Left ventricle myocardium inferior (tissue), 1 donor: ENCODE measurements at regions of chr6 and their contacts with region 1.

Region 1: GRCh38 chr6:34414999-34415858 is 10.6 kb downstream of the RPS10 start:
- DNase-seq: no peak
- H3K4me3 ChIP-seq: no peak overlapping the region
- H3K27ac ChIP-seq: peak overlapping the region; percentile 62
- H3K4me1 ChIP-seq: peaks cover 8% of the 10 kb centered on the region
- H3K27me3 ChIP-seq: no peaks in the 10 kb centered on the region
- CTCF ChIP-seq: peak; percentile 86

Region 2: DNA sequence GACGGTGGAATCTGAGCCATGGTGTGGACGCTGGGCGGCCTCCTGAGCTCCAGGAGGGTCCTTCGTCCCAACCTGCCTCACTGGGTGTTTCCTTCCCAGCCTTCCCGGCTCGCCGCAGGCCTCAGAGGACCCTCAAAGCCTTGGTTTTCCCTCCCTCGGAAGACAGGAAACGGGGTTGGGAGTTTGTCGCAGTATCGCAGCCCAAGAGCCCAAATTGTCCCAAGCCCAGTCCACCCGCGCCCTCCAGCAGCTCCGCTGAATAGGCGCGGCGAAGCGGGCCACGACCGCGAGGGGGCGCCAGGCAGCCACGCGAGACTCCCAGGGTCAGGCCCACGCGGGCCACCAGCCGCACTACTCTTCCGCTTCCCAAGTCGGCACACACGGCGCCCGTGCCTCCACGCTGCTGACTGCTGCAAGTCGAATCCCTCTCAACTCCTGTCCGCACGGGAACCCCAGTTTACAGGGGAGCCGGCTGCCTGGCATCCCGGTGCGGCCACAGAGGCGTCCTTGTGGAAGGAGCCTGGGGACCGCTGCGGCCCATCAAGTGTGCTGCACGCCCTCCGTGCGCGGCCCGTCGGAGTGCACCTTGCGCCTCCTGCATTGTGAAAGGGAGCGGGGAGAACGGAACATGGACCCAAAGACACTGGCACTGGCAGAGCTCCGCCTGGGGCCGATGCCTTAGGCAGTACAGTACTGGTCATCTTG is 219.0 kb before region 1 on chr6:
- intact Hi-C with region 1: loop called (anchors 10 kb)
- DNase-seq: peak; percentile 88
- H3K4me3 ChIP-seq: peak overlapping the region; percentile 72
- H3K27ac ChIP-seq: no peak overlapping the region
- H3K4me1 ChIP-seq: peaks cover 9% of the 10 kb centered on the region
- H3K27me3 ChIP-seq: no peaks in the 10 kb centered on the region
- CTCF ChIP-seq: peak; percentile 98

Region 3: DNA sequence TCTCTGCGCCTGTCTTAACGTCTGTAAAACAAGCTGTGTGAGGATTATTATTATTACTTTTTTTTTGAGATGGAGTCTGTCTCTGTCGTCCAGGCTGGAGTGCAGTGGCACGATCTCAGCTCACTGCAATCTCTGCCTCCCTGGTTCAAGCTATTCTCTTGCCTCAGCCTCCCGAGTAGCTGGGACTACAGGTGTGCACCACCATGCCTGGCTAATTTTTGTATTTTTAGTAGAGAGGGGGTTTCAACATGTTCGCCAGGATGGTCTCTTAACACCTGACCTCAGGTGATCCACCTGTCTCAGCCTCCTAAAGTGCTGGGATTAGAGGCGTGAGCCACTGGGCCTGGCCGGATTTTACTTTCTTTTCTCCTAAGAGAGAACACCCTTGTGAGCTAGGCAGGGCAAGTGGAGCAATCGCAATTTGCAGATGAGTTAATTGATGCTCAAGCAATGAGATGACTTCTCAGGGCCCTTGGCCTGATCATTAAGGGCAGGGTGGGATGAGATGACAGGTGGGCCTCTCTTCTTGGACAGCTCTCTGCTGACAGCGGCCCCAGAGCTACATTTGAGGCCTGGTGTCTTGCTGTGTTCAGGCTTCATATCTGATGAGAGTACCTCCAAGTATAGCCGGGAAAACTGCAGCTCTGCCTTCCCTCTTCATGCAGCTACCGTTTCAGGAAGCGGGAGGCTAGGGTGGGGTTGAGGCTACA is 165.5 kb before region 1 on chr6:
- intact Hi-C with region 1: loop called (anchors 5 kb)
- DNase-seq: no peak
- H3K4me3 ChIP-seq: peak overlapping the region; percentile 83
- H3K27ac ChIP-seq: peak overlapping the region; percentile 98
- H3K4me1 ChIP-seq: peaks cover 29% of the 10 kb centered on the region
- H3K27me3 ChIP-seq: no peaks in the 10 kb centered on the region
- CTCF ChIP-seq: no peak

Region 4: DNA sequence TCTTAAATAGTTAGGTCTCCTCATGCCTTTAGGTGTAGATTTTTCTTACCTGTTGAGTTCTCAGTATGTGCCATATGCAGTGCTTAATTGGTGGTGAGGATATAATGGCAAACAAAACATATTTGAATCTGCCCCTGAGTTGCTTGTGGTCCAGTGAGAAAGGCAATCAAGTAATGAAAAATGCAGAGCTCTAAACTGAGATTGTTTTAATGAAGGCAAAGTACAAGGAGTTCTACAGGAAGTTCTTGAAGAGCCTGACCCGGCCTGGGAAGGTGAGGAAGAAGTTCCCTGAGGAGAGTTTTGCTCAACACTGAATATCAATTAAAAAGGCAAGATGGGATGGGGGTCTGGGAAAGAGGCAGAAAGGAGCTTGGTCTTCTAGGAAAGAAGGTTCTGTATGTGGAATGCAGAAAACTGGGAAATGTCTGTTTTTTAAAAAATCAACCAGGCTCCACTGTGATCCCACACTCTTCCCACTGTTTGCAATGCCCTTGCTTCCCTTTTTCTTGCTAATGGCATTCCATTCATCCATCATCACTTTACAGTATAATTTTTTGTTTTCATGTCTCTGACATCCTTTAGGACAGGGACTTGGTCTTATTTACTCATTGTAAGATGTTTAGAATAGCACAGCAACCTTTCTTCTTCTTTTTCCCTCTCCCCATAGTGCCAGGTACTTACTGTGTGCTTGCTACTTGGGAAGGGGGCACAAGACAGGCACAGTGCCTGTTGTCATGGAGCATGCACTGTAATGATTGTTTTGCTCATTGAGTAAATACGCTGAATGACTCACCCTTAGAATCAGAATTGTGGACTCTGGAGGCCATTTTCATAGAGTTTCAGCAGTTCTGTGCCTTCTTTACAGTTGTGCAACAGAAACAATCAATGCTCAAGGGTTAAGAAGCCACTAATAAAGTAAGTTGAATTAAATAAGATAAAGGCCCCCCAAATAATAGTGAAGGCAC is 538.1 kb after region 1 on chr6:
- intact Hi-C with region 1: no loop called
- DNase-seq: no peak
- H3K4me3 ChIP-seq: no peak overlapping the region
- H3K27ac ChIP-seq: peak overlapping the region; percentile 66
- H3K4me1 ChIP-seq: peaks cover 65% of the 10 kb centered on the region
- H3K27me3 ChIP-seq: no peaks in the 10 kb centered on the region
- CTCF ChIP-seq: no peak